Right cardiac atrium (tissue), 5 donors: ENCODE measurements at regions of chr1 and their contacts with region 1.

Region 1: GRCh38 chr1:19300211-19300610 is 11.6 kb upstream of the AKR7A3 start:
- DNase-seq: no peak
- ATAC-seq: no peak
- H3K4me3 ChIP-seq: no peak overlapping the region
- H3K27ac ChIP-seq: no peak overlapping the region
- H3K4me1 ChIP-seq: no peaks in the 10 kb centered on the region
- H3K27me3 ChIP-seq: no peaks in the 10 kb centered on the region

Region 2: DNA sequence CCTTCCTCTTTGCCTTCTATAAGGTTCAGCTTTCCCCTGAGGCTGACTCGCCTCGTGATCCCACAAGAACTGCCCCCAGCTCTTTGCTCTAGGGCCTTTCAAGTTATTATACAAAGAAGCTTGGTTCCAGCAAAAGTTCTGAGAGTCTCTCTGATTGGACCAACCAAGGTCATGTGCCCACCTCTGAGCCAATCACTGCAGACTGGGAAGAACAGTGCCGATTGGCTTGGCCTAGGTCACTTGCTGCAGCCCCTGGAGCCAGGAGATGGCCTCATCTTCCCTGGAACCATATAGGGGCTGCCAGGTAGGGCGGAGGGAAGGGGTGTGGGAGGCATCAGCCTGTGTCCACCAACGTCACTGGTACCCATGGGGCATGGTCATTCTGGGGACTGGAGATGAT is 463.6 kb before region 1 on chr1:
- intact Hi-C with region 1: no loop called
- DNase-seq: no peak
- ATAC-seq: no peak
- H3K4me3 ChIP-seq: no peak overlapping the region
- H3K27ac ChIP-seq: no peak overlapping the region
- H3K4me1 ChIP-seq: no peaks in the 10 kb centered on the region
- H3K27me3 ChIP-seq: no peaks in the 10 kb centered on the region

Region 3: DNA sequence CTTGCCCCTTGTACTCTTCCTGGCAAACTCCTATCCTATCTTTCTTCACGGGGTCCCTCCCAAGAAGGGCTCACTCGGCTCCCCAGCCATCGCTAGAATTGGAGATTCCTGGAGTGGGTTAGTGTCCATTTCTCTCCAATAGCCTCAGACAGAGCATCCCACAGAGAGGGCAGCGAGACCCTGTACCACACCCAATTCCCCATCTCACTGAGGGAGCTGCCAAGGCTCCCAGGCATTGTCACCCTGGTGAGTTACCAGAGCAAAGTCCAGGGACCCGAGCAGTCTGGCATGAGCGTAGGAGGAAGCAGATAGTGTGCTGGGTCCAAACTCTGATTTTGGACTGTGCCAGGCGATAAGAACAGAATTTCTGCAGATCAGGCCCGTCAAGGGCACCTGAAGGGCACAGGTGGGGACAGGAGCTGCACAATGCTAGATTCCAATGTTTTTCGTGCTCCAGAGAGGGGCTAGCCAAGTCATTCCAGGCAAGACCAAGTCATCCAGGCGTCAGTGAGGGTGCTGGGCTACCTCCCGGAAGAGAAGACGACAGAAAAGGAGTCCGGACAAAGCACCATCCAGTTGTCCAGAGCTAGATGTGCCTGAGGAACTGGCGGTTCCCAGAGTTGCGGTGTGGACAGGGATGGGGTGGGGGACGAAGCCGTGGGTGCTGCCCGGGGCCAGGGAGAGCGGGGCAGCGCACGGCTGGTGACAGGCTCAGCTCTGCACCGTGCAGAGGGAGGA is 26.9 kb before region 1 on chr1:
- intact Hi-C with region 1: loop called in 1 of 4 experiments (anchors 2 kb)
- DNase-seq: no peak
- ATAC-seq: peak in 1 of 2 donors; percentile 41
- H3K4me3 ChIP-seq: no peak overlapping the region
- H3K27ac ChIP-seq: no peak overlapping the region
- H3K4me1 ChIP-seq: no peaks in the 10 kb centered on the region
- H3K27me3 ChIP-seq: no peaks in the 10 kb centered on the region